IMR-90 (cell line): ENCODE measurements at regions of chr15 and their contacts with region 1.

Region 1: GRCh38 chr15:74265046-74265639 is 29.0 kb downstream of the CCDC33 start:
- DNase-seq: peak; percentile 18
- ATAC-seq: no peak
- H3K4me3 ChIP-seq: no peak overlapping the region
- H3K27ac ChIP-seq: no peak overlapping the region
- H3K4me1 ChIP-seq: no peaks in the 10 kb centered on the region
- H3K27me3 ChIP-seq: peaks cover 66% of the 10 kb centered on the region
- CTCF ChIP-seq: no peak
- POLR2A ChIP-seq: no peak
- RAD21 ChIP-seq: no peak

Region 2: GRCh38 chr15:74011610-74012009 is 253.5 kb before region 1 on chr15:
- CTCF ChIA-PET with region 1: no interaction called
- POLR2A ChIA-PET with region 1: interaction called, 11 read pairs
- dilution Hi-C with region 1: no loop called
- in situ Hi-C with region 1: no loop called
- intact Hi-C with region 1: no loop called
- DNase-seq: peak; percentile 46
- ATAC-seq: peak; percentile 79
- H3K4me3 ChIP-seq: no peak overlapping the region
- H3K27ac ChIP-seq: peak overlapping the region; percentile 59; the same call in 1 of the 2 replicates
- H3K4me1 ChIP-seq: peaks cover 9% of the 10 kb centered on the region
- H3K27me3 ChIP-seq: no peaks in the 10 kb centered on the region
- CTCF ChIP-seq: no peak
- POLR2A ChIP-seq: no peak
- RAD21 ChIP-seq: no peak

Region 3: DNA sequence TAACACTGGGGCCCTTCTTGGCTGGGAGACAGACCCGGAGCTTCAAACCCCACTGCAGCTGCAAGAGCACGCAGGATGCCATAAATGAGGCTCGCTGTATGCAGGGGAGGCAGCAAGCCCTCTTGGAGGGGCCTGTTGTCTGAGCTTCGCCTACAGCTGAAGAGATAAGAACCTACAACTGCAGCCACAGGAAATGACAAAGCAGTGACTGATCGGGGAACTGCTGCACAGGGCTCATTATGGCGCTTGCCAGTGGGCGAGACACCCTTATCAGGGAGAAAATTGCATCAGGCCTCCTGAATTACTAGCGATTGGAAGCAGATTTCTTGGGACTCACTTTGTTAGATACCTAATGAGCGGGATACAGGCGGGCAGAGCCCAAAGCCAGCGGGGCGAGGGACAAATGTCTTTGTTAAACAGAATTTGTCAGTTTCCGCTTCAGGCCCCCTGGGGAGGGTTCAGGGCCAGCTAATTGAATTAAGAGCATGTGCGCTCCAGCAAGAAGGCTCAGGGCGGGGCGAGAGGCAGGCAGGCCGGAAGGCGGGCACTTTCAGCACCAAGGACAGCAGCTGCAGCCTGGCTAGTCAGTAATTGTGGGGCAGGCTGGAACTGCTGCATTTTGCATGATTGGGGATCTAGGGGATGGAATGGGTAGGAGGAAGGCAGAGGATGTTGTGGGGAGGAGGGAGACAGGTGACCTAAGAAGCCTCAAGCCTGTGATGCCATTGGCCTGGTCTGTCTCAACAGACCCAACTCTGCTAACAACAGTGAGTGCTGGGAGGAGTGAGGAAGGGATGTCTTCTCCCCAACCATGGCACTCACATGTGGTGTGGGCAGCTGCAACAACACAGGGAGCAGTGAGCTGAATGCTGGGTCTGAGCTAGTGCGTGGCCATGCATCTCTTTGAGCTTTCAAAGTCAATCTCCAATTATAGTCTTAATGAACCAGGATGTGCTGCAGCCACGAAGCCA is 26.2 kb after region 1 on chr15:
- CTCF ChIA-PET with region 1: no interaction called
- POLR2A ChIA-PET with region 1: no interaction called
- dilution Hi-C with region 1: no loop called
- in situ Hi-C with region 1: no loop called
- intact Hi-C with region 1: loop called (anchors 1 kb)
- DNase-seq: peak; percentile 68
- ATAC-seq: peak; percentile 99
- H3K4me3 ChIP-seq: no peak overlapping the region
- H3K27ac ChIP-seq: no peak overlapping the region
- H3K4me1 ChIP-seq: no peaks in the 10 kb centered on the region
- H3K27me3 ChIP-seq: peaks cover 33% of the 10 kb centered on the region
- CTCF ChIP-seq: no peak
- POLR2A ChIP-seq: no peak
- RAD21 ChIP-seq: 0 out of 2 replicates have a peak, but pooled peaks have one; percentile 18